Stomach (tissue), 19 donors: ENCODE measurements at regions of chr2 and their contacts with region 1.

Region 1: DNA sequence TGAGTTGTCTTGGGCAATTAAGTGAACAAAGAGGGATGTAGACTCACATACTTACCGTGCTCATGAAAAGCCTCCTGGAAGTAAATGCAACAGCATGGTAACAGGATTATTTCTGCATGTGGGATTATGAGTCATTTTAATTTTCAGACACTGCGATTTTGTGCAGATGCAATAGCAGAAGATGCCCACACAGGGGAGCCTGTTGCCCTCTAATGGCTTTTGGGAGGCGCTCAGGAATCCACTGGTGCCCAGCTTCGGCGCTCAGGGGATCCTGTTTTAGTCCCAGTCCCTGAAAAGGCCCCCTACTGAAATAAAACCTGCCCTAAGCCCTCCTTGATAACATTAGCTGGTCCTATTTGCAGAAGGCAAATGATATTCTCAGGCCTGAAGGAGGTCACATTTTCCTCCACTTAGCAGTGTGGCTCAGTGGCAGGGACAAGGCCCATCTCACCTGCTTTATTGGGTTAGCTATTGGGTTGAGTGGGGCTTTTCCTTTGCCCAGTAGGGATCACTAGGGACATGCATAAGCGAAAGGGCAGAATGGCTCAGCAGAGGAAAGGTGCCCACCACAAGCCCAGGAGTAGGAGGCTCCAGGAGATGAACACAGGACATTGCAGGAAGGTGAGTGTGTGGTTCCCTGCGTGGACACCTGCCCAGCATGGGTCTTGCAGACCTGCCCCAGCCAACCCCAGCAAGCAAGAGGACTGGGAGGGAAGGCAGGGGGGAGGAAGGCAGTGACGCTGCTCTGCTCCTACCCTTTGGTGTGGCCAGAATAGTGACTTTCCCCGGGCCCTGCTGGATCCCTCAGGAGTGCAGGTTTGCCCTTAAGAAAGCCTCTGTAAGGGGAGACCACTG is 26.5 kb upstream of the KCNS3 start:
- DNase-seq: peak; percentile 59 to 78
- H3K4me3 ChIP-seq: no peak overlapping the region
- H3K27ac ChIP-seq: no peak overlapping the region
- H3K4me1 ChIP-seq: peaks cover 0 to 5% (median 4%) of the 10 kb centered on the region in 4 donors
- H3K27me3 ChIP-seq: peaks cover 0 to 6% (median 0%) of the 10 kb centered on the region in 3 donors
- CTCF ChIP-seq: peak in 5 of 7 experiments; percentile 78 to 95 (median 82)
- EP300 ChIP-seq: no peak
- POLR2A ChIP-seq: no peak

Region 2: DNA sequence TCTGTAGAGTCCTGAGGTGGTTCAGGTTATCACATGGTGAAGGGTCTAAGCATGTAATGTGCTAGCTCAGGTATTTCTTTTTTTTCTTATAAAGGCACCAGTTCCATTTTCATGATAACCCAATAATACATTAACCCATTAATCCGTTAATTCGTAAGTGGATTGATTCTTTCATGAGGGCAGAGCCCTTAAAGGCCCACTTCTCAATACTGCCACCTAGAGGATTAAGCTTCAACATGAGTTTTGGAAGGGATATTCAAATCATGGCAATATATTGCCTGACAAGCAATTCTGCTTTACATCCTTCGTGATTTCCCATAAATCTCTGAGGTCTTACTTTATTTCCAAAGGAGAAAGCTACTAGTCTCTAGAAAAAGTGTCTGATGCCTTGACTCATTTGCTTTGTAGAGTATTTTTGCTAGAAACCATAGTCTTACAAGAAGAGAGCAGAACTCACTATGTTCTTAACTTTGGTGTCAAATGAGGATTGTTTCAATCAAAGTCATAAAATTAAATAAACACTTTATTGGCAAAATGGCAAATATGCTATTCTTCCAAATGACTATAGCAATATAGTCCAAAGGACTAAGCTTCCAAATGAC is 297.8 kb after region 1 on chr2:
- intact Hi-C with region 1: loop called (anchors 10 kb)
- DNase-seq: peak in 1 of 2 donors; percentile 61
- H3K4me3 ChIP-seq: no peak overlapping the region
- H3K27ac ChIP-seq: no peak overlapping the region
- H3K4me1 ChIP-seq: no peaks in the 10 kb centered on the region
- H3K27me3 ChIP-seq: no peaks in the 10 kb centered on the region
- CTCF ChIP-seq: peak in 5 of 7 experiments; percentile 23 to 76 (median 51)
- EP300 ChIP-seq: no peak
- POLR2A ChIP-seq: no peak

Region 3: DNA sequence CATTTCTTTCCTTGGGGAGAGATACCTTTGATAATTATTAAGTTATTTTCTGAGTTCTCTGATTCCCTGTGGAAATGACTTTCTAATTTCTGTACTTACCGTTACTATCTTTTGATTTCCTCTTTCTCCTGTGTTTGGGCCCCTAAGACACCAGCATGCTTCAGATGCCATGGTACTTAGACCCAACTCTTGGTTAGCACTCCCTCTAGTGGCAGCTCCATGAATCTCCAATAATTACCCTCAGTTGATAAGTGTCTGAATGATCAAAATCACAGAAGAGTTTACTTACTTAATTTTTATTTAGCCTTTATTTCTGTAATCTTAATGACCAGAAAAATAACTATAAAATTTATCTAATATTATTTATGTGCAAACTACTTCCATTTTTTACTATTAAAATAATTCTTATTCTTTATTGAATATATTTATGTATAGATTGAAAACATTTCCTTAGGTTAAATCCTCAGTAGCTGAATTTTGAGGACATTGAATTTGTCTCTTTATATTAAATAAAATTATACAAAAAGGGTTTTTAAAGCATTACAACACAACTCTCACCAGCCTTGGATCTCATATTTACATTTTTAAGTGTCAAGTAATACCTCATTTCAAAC is 326.9 kb after region 1 on chr2:
- intact Hi-C with region 1: loop called (anchors 5 kb)
- DNase-seq: peak; percentile 37 to 68
- H3K4me3 ChIP-seq: no peak overlapping the region
- H3K27ac ChIP-seq: no peak overlapping the region
- H3K4me1 ChIP-seq: no peaks in the 10 kb centered on the region
- H3K27me3 ChIP-seq: no peaks in the 10 kb centered on the region
- CTCF ChIP-seq: peak in 5 of 7 experiments; percentile 12 to 81 (median 64)
- EP300 ChIP-seq: no peak
- POLR2A ChIP-seq: no peak

Region 4: DNA sequence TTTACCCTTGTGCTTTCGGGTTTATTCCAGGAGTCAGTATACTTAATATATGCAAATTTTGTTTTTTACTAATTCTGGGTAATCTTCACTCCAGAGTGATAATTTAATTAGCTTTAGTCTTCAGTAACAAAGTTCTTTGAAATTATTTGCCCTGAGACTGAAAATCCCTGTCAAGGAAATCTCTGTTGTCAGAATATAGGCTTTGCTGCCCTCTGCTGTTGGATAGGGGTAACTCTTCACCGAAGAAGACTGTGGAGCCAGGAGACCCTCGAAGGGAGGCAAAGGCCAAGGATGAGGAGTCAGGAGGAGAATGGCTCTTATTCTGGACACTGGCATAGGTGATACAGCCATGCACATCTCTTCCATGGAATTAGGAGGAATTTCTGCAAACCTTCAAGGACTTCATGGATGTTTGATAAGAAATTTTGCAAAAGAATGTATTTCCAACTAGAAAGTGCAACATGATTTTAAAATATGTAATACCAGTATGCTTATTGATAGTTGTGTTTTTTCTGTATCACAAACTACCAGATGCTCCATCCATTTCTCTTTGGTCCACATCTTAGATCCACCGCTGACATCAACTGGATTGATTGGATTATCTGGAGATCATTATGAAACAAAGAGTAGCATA is 526.2 kb after region 1 on chr2:
- intact Hi-C with region 1: loop called (anchors 10 kb)
- DNase-seq: peak in 1 of 2 donors; percentile 76
- H3K4me3 ChIP-seq: no peak overlapping the region
- H3K27ac ChIP-seq: no peak overlapping the region
- H3K4me1 ChIP-seq: no peaks in the 10 kb centered on the region
- H3K27me3 ChIP-seq: peaks cover 0 to 7% (median 0%) of the 10 kb centered on the region in 3 donors
- CTCF ChIP-seq: peak in 5 of 7 experiments; percentile 46 to 76 (median 69)
- EP300 ChIP-seq: no peak
- POLR2A ChIP-seq: no peak